Activated T-helper 2 cell treated with anti-CD3 and anti-CD28 coated beads, Interferon-gamma antibody, Interleukin-2, Interleukin-4, amounts not matched to agents 10 μg/mL and 5 μg/mL and 100 μg/mL, durations not matched to agents 14 hours and 24 hours and 36 hours (primary cell): ENCODE measurements at regions of chr10 and their contacts with region 1.

Region 1: GRCh38 chr10:1048732-1049424 is at the start of gene IDI1:
- DNase-seq: peak; percentile 98
- H3K4me3 Mint-ChIP-seq: peak within 1 kb of the TSS; percentile 93
- H3K27ac Mint-ChIP-seq: peak within 1 kb of the TSS; percentile 94
- H3K4me1 Mint-ChIP-seq: peaks cover 53% of the 10 kb centered on the region
- H3K27me3 Mint-ChIP-seq: no peaks in the 10 kb centered on the region
- total RNA-seq, gene IDI1: 80.1 and 89.6 TPM in 2 replicates

Region 2: DNA sequence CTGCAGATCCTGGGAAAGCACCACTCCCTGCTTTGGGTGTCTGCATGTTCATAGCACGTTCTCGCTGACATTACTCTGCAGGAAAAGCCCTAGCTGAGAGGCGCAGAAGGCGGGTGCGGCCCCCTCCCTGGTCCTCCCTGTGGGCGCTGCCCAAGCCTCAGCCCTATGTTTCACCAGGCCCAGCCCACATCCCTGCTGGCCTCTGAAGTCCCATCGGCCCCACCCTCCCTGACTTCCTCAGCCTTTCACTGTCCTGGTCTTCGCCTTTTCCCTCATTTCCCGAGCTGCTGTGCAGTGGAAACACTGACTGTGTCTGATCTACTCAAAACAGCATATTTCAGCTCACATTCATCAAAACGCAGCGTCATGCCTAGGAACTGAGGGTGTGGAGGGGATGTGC is 323.1 kb before region 1 on chr10:
- intact Hi-C with region 1: no loop called
- DNase-seq: no peak
- H3K4me3 Mint-ChIP-seq: no peak overlapping the region
- H3K27ac Mint-ChIP-seq: no peak overlapping the region
- H3K4me1 Mint-ChIP-seq: no peaks in the 10 kb centered on the region
- H3K27me3 Mint-ChIP-seq: no peaks in the 10 kb centered on the region

Region 3: DNA sequence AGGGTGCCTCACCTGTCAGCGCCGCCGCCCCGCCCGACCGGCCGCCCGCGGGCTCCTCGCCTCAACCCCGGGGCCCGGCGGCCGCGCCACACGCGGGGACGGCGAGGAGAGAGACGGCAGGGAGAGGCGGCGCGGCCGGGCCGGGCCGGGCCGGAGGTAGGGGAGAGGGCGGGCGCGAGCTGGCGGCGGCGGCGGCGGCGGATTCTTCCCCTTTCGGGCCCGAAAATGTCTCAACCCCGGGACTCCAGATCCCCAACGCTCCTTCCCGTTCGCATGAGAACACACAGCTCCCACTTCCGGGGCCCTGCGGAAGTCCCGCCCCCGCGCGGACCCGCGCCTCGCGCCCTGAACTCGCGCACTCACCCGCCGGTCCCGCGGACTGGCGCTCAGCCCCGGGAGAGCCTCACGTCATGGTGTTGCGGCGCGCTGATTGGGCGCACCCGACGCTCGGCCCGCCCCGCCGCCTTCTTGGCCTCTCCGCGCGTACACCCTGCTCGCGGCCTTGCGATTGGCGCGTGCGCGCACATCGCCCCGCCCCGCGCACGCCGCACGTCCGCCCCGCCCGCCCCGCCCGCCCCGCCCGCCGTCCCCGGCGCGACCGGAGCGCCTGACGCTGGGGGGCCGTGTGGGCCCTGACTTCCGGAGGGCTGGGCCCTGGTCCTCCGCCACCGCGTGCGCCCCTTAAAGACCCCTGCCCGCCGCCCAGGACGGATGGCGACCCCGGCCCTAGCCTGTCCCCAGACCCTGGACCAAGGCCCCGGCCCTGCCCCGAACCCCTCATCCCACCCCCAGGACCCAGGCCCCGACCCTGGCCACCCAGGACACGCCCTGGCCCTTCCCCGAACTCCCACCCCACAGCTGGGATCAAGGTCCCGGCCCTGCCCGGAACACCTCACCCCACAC is 117.2 kb before region 1 on chr10 and contains the start of gene LARP4B:
- intact Hi-C with region 1: loop called (anchors 1 kb)
- DNase-seq: peak; percentile 98
- H3K4me3 Mint-ChIP-seq: peak within 1 kb of the TSS; percentile 95
- H3K27ac Mint-ChIP-seq: peak within 1 kb of the TSS; percentile 93
- H3K4me1 Mint-ChIP-seq: peaks cover 33% of the 10 kb centered on the region
- H3K27me3 Mint-ChIP-seq: no peaks in the 10 kb centered on the region
- total RNA-seq, gene LARP4B: 137 and 152 TPM in 2 replicates

Region 4: GRCh38 chr10:987870-988666 is 60.8 kb before region 1 on chr10 and contains the start of gene GTPBP4:
- intact Hi-C with region 1: loop called (anchors 2 kb)
- DNase-seq: peak; percentile 94
- H3K4me3 Mint-ChIP-seq: peak within 1 kb of the TSS; percentile 91
- H3K27ac Mint-ChIP-seq: peak within 1 kb of the TSS; percentile 93
- H3K4me1 Mint-ChIP-seq: peaks cover 22% of the 10 kb centered on the region
- H3K27me3 Mint-ChIP-seq: no peaks in the 10 kb centered on the region
- total RNA-seq, gene GTPBP4: 134 and 135 TPM in 2 replicates